Right cardiac atrium (tissue), 5 donors: ENCODE measurements at regions of chr18 and their contacts with region 1.

Region 1: GRCh38 chr18:7177116-7177744 is 53.7 kb upstream of the LRRC30 start:
- DNase-seq: peak in 2 of 3 donors; percentile 29 to 56
- ATAC-seq: peak; percentile 88 to 94
- H3K4me3 ChIP-seq: no peak overlapping the region
- H3K27ac ChIP-seq: no peak overlapping the region
- H3K4me1 ChIP-seq: no peaks in the 10 kb centered on the region
- H3K27me3 ChIP-seq: no peaks in the 10 kb centered on the region

Region 2: DNA sequence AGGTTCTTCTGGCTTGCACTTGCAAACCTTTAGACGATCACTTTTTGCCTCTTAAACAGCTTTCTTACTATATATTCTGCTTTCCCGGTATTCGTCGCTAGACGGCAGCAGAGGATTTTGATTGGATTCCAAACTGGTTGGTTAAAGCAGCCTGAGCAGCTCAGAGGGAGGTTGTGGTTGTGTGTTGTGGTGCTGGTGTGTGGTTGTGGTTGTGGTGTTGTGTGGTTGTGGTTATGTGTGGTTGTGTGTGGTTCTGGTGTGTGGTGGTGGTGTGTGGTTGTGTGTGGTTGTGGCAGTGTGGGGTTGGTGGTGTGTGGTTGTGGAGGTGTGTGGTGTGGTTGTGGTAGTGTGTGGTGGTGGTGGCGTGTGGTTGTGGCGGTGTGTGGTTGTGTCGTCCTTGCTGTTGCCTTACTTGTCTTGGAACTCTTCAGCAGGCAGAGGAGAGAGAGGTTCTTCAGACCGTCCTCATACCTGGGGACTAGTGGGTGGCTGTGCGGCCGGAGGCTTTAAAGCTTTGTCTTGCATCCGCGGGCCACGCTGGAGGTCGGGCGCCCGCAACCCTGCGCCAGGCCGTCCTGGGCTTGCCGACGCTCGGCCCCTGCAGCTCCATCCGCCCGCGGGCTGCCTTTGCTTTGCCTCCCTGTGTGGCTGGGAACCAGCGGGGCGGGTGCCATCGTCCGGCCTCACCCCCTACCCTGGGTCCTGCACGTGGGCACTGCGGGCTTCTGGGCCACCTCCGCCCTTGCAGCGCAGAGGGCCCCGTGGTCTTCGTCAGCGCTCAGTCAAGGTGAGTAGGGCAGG is 256.9 kb before region 1 on chr18:
- intact Hi-C with region 1: loop called in 3 of 4 experiments (anchors 10 kb)
- DNase-seq: peak in 2 of 3 donors; percentile 25 to 40
- ATAC-seq: peak; percentile 51 to 52
- H3K4me3 ChIP-seq: no peak overlapping the region
- H3K27ac ChIP-seq: no peak overlapping the region
- H3K4me1 ChIP-seq: no peaks in the 10 kb centered on the region
- H3K27me3 ChIP-seq: no peaks in the 10 kb centered on the region

Region 3: GRCh38 chr18:7417742-7418141 is 240.5 kb after region 1 on chr18:
- intact Hi-C with region 1: no loop called
- DNase-seq: no peak
- ATAC-seq: no peak
- H3K4me3 ChIP-seq: no peak overlapping the region
- H3K27ac ChIP-seq: no peak overlapping the region
- H3K4me1 ChIP-seq: no peaks in the 10 kb centered on the region
- H3K27me3 ChIP-seq: no peaks in the 10 kb centered on the region